ENCODE measurements at regions of chr20 and their contacts with region 1.

Region 1: GRCh38 chr20:1118336-1119127 is at the start of gene PSMF1:
- DNase-seq: peak; percentile 86
- ATAC-seq: peak; percentile 96
- H3K4me3 ChIP-seq: peak within 1 kb of the TSS; percentile 96
- H3K27ac ChIP-seq: peak within 1 kb of the TSS; percentile 63
- H3K4me1 ChIP-seq: peaks cover 14% of the 10 kb centered on the region
- H3K27me3 ChIP-seq: no peaks in the 10 kb centered on the region
- CTCF ChIP-seq: no peak
- POLR2A ChIP-seq: peak; percentile 56
- RAD21 ChIP-seq: no peak
- total RNA-seq, gene PSMF1: 93.6 and 120 TPM in 2 replicates

Region 2: DNA sequence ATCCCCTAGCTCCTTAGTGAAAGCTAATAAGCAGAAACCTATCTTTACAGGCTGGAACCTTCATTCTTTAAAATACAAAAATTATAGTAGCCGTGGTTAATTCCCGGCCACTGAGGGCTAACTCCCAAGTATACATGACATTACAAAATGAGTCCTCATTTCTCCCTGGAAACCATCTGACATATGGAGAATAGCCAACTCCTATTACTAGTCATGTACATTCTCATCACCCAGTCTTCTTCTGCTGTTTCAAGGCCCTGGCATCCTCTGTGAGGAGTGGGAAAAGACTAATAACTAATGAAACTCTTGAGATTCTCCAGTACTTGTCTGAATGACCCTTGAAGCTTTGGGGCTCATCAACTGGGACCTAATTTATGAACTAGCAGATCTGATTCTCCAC is 605.1 kb before region 1 on chr20:
- CTCF ChIA-PET with region 1: no interaction called
- POLR2A ChIA-PET with region 1: no interaction called
- dilution Hi-C with region 1: no loop called
- in situ Hi-C with region 1: no loop called
- intact Hi-C with region 1: no loop called
- DNase-seq: peak; percentile 44
- ATAC-seq: no peak
- H3K4me3 ChIP-seq: no peak overlapping the region
- H3K27ac ChIP-seq: no peak overlapping the region
- H3K4me1 ChIP-seq: peaks cover 5% of the 10 kb centered on the region
- H3K27me3 ChIP-seq: no peaks in the 10 kb centered on the region
- CTCF ChIP-seq: no peak
- POLR2A ChIP-seq: no peak
- RAD21 ChIP-seq: no peak

Region 3: DNA sequence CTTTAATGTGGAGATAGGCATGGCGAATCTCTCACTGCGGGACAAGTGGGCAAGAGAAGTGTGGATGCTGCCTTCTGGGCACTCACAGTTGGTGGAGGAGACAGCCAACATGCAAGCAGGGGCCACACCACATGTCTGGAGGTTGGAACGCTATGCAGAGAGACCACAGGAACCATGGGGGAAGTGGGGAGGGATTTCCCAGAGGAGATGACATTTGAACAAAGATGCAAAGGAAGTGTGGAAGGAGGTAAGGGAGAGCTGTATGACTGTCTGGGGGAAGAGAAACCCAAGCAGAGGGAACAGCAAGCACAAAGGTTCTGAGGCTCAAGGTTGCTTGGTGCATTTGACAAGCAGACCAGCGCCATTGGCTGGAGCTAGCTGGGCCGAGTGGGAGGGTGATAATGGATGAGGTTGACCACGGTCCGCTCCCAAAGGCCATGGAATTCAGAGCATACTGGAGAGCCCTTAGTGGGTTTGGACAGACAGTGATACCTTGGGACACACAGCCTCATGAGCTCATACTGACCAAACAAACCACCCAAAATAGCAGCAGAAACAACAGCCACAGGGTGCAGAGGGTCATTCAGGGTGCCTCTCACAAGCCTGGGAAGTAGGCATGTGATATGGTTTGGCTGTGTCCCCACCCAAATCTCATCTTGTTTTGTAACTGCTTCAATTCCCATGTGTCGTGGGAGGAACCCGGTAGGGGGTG is 292.7 kb before region 1 on chr20:
- CTCF ChIA-PET with region 1: no interaction called
- POLR2A ChIA-PET with region 1: no interaction called
- dilution Hi-C with region 1: no loop called
- in situ Hi-C with region 1: loop called (anchors 10 kb)
- intact Hi-C with region 1: no loop called
- DNase-seq: peak; percentile 8
- ATAC-seq: no peak
- H3K4me3 ChIP-seq: no peak overlapping the region
- H3K27ac ChIP-seq: no peak overlapping the region
- H3K4me1 ChIP-seq: 0 out of 2 replicates have a peak, but pooled peaks cover 4% of the 10 kb centered on the region
- H3K27me3 ChIP-seq: no peaks in the 10 kb centered on the region
- CTCF ChIP-seq: no peak
- POLR2A ChIP-seq: no peak
- RAD21 ChIP-seq: no peak